H1 (cell line): ENCODE measurements at regions of chr3 and their contacts with region 1.

Region 1: DNA sequence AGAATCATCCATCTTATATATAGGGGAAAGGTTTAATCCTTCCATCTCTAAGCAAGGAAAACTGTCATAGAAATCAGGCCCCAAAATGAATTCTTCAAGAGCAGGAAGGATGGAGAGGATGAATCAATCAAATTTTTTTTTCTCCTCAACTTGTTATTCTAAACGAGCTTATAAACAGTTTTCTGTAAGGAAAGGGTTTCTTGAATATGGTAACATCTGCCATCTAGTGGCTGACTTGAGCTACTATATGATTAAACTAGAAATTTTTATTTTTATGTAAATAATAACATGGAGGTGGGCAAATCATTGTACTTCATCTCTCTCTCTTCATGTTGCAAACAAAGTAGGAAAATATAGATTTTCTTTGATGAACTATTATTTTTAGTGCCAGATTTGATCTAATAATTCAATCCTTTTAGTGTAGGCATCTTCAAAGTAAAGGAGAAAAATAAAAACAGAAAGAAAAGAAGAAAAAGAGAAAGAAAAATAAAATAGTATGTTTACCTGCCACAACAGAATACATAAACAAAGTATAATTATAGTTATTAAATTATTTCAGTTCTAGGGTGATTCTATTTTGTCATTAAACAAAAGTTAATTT is 146.6 kb downstream of the SERPINI1 start:
- DNase-seq: no peak
- H3K4me3 ChIP-seq: no peak overlapping the region
- H3K27ac ChIP-seq: no peak overlapping the region
- H3K4me1 ChIP-seq: no peaks in the 10 kb centered on the region
- H3K27me3 ChIP-seq: no peaks in the 10 kb centered on the region
- CTCF ChIP-seq: peak in 2 of 3 experiments; percentile 34 to 37; a peak in 2 of 4 replicates
- EP300 ChIP-seq: no peak
- POLR2A ChIP-seq: no peak
- RAD21 ChIP-seq: peak in 1 of 2 experiments; percentile 54

Region 2: GRCh38 chr3:167626490-167626889 is 255.7 kb before region 1 on chr3:
- CTCF ChIA-PET with region 1: no interaction called
- POLR2A ChIA-PET with region 1: no interaction called
- DNase-seq: no peak
- H3K4me3 ChIP-seq: no peak overlapping the region
- H3K27ac ChIP-seq: no peak overlapping the region
- H3K4me1 ChIP-seq: no peaks in the 10 kb centered on the region
- H3K27me3 ChIP-seq: no peaks in the 10 kb centered on the region
- CTCF ChIP-seq: no peak
- EP300 ChIP-seq: no peak
- POLR2A ChIP-seq: no peak
- RAD21 ChIP-seq: no peak

Region 3: GRCh38 chr3:167783781-167784180 is 98.4 kb before region 1 on chr3:
- CTCF ChIA-PET with region 1: no interaction called
- POLR2A ChIA-PET with region 1: no interaction called
- DNase-seq: no peak
- H3K4me3 ChIP-seq: no peak overlapping the region
- H3K27ac ChIP-seq: no peak overlapping the region
- H3K4me1 ChIP-seq: peaks cover 0 to 7% (median 0%) of the 10 kb centered on the region in 4 experiments; a peak in 2 of 7 replicates
- H3K27me3 ChIP-seq: no peaks in the 10 kb centered on the region
- CTCF ChIP-seq: no peak
- EP300 ChIP-seq: no peak
- POLR2A ChIP-seq: no peak
- RAD21 ChIP-seq: no peak

Region 4: DNA sequence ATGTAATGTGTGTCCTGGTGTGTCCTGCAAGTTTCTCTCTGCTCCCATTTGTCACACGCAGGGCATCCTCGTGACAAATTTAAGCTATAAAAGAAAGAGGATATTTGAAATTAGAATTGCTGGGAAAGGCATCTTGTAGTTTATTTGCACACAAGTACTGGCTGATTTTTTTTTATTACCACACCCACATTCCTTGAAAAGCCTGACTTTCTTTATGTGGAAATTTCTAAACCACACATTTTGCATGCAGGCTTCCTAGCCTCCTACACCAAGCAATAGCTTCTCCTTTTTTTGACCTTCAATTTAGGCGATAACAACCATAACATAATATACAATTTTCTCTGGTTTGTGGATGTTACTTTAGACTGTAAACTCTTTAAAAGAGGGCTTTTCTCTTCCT is 20.5 kb before region 1 on chr3:
- CTCF ChIA-PET with region 1: interaction called, 11 read pairs
- POLR2A ChIA-PET with region 1: no interaction called
- DNase-seq: no peak
- H3K4me3 ChIP-seq: no peak overlapping the region
- H3K27ac ChIP-seq: no peak overlapping the region
- H3K4me1 ChIP-seq: no peaks in the 10 kb centered on the region
- H3K27me3 ChIP-seq: no peaks in the 10 kb centered on the region
- CTCF ChIP-seq: no peak
- EP300 ChIP-seq: no peak
- POLR2A ChIP-seq: no peak
- RAD21 ChIP-seq: no peak

Region 5: DNA sequence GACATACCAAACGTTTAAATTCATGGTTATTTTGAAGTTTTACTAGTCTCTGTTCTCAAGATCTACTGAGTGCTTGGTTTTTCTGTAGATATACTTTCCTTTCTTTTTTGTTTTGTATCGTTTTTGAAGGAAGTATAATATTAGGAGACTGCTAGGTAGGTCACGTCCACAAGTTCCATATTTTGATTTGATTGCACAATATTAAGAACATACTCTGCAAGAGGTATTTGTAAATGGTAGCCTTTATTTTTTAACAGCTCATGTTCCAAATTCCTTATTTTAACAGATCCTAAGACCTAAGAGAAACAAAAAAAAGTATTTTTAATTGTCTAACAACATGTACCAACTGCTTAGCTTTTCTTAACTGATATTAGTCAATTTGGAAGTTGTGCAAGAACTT is 10.0 kb after region 1 on chr3:
- CTCF ChIA-PET with region 1: interaction called, 17 read pairs
- POLR2A ChIA-PET with region 1: no interaction called
- DNase-seq: no peak
- H3K4me3 ChIP-seq: no peak overlapping the region
- H3K27ac ChIP-seq: no peak overlapping the region
- H3K4me1 ChIP-seq: peaks cover 0 to 5% (median 0%) of the 10 kb centered on the region in 4 experiments; a peak in 1 of 7 replicates
- H3K27me3 ChIP-seq: no peaks in the 10 kb centered on the region
- CTCF ChIP-seq: no peak
- EP300 ChIP-seq: no peak
- POLR2A ChIP-seq: no peak
- RAD21 ChIP-seq: no peak

Region 6: GRCh38 chr3:167899093-167899492 is 16.9 kb after region 1 on chr3:
- CTCF ChIA-PET with region 1: interaction called, 17 read pairs
- POLR2A ChIA-PET with region 1: no interaction called
- DNase-seq: no peak
- H3K4me3 ChIP-seq: no peak overlapping the region
- H3K27ac ChIP-seq: no peak overlapping the region
- H3K4me1 ChIP-seq: peaks cover 0 to 5% (median 0%) of the 10 kb centered on the region in 4 experiments; a peak in 1 of 7 replicates
- H3K27me3 ChIP-seq: no peaks in the 10 kb centered on the region
- CTCF ChIP-seq: no peak
- EP300 ChIP-seq: no peak
- POLR2A ChIP-seq: no peak
- RAD21 ChIP-seq: no peak